ENCODE measurements at regions of chr3 and their contacts with region 1.

Region 1: GRCh38 chr3:17841190-17841828 is 98.9 kb upstream of the TBC1D5 start:
- DNase-seq: peak; percentile 15 to 94 (median 74)

Region 2: GRCh38 chr3:17266846-17267245 is 574.5 kb before region 1 on chr3:
- intact Hi-C with region 1: loop called (anchors 5 kb)
- DNase-seq: no peak

Region 3: GRCh38 chr3:17431004-17431403 is 410.3 kb before region 1 on chr3:
- intact Hi-C with region 1: loop called (anchors 2 kb)
- DNase-seq: no peak

Region 4: GRCh38 chr3:17645072-17645698 is 196.1 kb before region 1 on chr3:
- intact Hi-C with region 1: loop called (anchors 2 kb)
- DNase-seq: peak in 2 of 10 donors; percentile 17 to 45

Region 5: GRCh38 chr3:17742108-17742879 is 99.0 kb before region 1 on chr3 and contains the start of gene TBC1D5:
- intact Hi-C with region 1: loop called (anchors 2 kb)
- DNase-seq: peak; percentile 52 to 99 (median 95)

Region 6: DNA sequence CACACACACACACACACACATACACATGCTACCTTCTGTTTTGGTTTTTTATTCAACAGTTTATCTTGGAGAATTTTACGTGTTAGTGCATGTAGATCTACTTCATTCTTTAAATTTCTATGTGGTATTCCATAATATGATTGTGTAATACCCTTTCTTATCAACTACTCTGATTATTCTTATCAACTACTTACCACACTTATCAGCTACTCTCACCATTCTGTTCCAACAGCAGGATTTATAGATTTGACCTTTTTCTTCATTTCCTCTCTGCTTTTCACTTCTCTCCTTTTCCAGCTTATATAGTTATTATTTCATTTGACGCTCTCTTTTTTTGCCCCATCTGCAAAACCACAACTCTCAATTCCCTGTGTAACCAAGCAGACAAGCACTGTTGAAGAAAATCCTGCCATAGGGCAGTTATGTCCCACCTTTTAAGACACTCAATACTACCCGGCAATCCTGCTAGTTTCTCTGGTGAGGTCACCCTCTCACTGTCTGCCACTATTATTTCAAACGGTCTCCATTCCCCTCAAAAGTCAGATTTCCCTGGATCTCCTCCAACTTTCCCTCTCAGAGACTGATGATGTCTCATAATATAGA is 640.7 kb after region 1 on chr3:
- intact Hi-C with region 1: no loop called
- DNase-seq: no peak